ENCODE measurements at regions of chr2 and their contacts with region 1.

Region 1: GRCh38 chr2:172427256-172427989 is at the start of gene ITGA6:
- DNase-seq: peak; percentile 49 to 59
- ATAC-seq: peak; percentile 69 to 72
- H3K4me3 ChIP-seq: peak within 1 kb of the TSS; percentile 65 to 88 (median 76)
- H3K27ac ChIP-seq: peak within 1 kb of the TSS; percentile 73 to 92 (median 81)
- H3K4me1 ChIP-seq: peaks cover 19 to 23% of the 10 kb centered on the region in 2 donors
- H3K27me3 ChIP-seq: no peaks in the 10 kb centered on the region
- CTCF ChIP-seq: peak in 1 of 5 experiments; percentile 40
- POLR2A ChIP-seq: peak; percentile 52 to 84
- total RNA-seq, gene ITGA6: 22.5 to 40.6 (median 29.2) TPM

Region 2: DNA sequence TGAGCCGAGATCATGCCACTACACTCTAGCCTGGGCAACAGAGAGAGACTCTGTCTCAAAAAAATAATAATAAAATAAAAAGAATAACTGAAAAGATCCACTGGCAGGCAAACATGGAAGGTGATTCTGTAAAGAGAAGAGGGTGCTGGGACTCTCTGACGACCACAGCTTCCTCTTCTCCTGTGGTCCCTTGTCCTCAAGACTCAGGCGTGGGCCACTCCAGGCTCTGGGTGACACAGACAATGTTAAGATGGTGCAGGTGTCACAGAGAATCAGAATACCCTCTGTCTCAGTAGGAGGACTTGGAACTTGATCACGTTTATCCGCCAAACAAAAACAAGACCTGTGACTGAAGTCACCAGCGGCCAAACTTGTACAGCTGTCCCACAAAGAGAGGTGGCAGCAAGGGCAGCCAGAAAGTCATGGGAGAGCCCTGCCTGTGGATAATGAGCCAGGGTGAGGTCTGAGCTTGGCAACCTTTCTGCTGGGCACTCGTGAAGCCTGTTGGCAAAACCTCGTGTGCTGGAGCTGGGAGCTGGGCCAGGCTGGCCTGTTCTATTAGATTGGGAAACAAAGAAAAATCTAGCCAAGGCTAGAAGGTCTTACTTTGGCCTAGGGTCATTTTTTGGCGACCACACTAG is 76.5 kb before region 1 on chr2:
- in situ Hi-C with region 1: no loop called
- intact Hi-C with region 1: loop called (anchors 10 kb)
- DNase-seq: peak; percentile 89 to 94
- ATAC-seq: peak; percentile 99
- H3K4me3 ChIP-seq: no peak overlapping the region
- H3K27ac ChIP-seq: peak overlapping the region; percentile 75 to 87 (median 76)
- H3K4me1 ChIP-seq: peaks cover 11 to 24% of the 10 kb centered on the region in 2 donors
- H3K27me3 ChIP-seq: no peaks in the 10 kb centered on the region
- CTCF ChIP-seq: no peak
- POLR2A ChIP-seq: no peak

Measured in gastrocnemius medialis (tissue), 4 donors.